Posterior vena cava (tissue), 2 donors: ENCODE measurements at regions of chr7 and their contacts with region 1.

Region 1: GRCh38 chr7:100452513-100452912 is 11.5 kb downstream of the SPACDR start:
- DNase-seq: no peak

Region 2: GRCh38 chr7:100396421-100396982 is 56.0 kb before region 1 on chr7:
- intact Hi-C with region 1: loop called in 1 of 2 experiments (anchors 2 kb)
- DNase-seq: no peak